Caco-2 (cell line): ENCODE measurements at regions of chr14 and their contacts with region 1.

Region 1: DNA sequence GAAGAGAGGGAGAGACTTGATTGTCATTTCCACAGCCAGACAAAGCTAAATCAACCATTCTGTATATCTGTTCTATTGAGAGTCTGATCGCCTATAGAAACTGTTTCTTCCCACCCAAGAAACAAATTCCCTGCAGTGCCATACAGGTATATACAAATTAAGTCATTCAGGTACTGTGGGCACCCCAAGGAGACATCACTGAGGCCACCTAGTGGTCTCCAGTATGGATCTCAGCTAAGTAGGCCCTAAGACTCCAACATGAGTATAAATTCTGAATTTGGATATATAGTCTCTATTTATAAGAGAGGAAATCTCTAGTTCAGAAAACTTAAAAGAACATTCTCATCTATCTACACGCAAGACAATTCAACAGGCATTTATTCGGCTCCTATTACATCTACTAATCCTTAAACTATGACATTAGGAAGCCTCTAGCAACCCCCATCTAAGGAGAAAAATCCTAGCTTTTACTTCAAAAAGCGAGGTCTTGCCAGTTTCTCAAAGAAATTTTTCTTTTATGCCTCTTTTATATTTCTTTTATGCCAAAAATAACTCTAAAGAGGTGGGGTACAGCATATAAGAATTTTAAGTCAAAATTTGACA is 62.6 kb downstream of the DCAF5 start:
- DNase-seq: peak; percentile 51 to 58
- H3K4me3 ChIP-seq: no peak overlapping the region
- H3K4me3 Mint-ChIP-seq: no peak overlapping the region
- H3K27ac Mint-ChIP-seq: no peak overlapping the region
- H3K4me1 ChIP-seq: peaks cover 37% of the 10 kb centered on the region
- H3K4me1 Mint-ChIP-seq: peaks cover 26% of the 10 kb centered on the region
- H3K27me3 ChIP-seq: no peaks in the 10 kb centered on the region; the same call in 1 of the 2 replicates
- H3K27me3 Mint-ChIP-seq: no peaks in the 10 kb centered on the region
- CTCF ChIP-seq: peak; percentile 47 to 77

Region 2: GRCh38 chr14:69101331-69101826 is 11.1 kb after region 1 on chr14:
- CTCF ChIA-PET with region 1: interaction called, 3 read pairs
- POLR2A ChIA-PET with region 1: no interaction called
- intact Hi-C with region 1: loop called (anchors 1 kb)
- DNase-seq: peak in 1 of 2 experiments; percentile 65
- H3K4me3 ChIP-seq: no peak overlapping the region
- H3K4me3 Mint-ChIP-seq: no peak overlapping the region
- H3K27ac Mint-ChIP-seq: peak overlapping the region; percentile 63
- H3K4me1 ChIP-seq: peaks cover 7% of the 10 kb centered on the region
- H3K4me1 Mint-ChIP-seq: peaks cover 13% of the 10 kb centered on the region
- H3K27me3 ChIP-seq: no peaks in the 10 kb centered on the region
- H3K27me3 Mint-ChIP-seq: no peaks in the 10 kb centered on the region
- CTCF ChIP-seq: peak; percentile 26 to 64

Region 3: DNA sequence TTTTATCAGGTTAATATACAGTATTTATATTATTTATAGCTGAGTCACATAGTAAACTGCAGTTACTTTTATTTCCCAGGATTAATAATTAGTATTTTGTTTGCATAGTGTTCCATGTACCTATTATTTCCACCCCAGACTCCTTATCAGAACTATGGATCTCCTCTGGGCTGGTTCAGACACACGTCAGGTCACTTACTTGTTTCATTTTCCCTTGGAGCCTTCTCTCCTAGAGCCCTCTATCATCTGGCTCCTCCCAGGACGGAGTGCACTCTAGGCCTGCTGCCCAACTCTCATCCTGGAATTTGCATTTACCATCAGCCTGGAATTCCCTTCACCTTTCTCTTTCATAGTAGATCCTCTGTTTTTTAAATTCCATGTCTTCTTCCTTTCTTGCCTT is 141.2 kb after region 1 on chr14:
- CTCF ChIA-PET with region 1: no interaction called
- POLR2A ChIA-PET with region 1: no interaction called
- intact Hi-C with region 1: no loop called
- DNase-seq: no peak
- H3K4me3 ChIP-seq: no peak overlapping the region
- H3K4me3 Mint-ChIP-seq: no peak overlapping the region
- H3K27ac Mint-ChIP-seq: no peak overlapping the region
- H3K4me1 ChIP-seq: no peaks in the 10 kb centered on the region
- H3K4me1 Mint-ChIP-seq: no peaks in the 10 kb centered on the region
- H3K27me3 ChIP-seq: no peaks in the 10 kb centered on the region
- H3K27me3 Mint-ChIP-seq: no peaks in the 10 kb centered on the region
- CTCF ChIP-seq: no peak